ENCODE measurements at regions of chr12 and their contacts with region 1.

Region 1: GRCh38 chr12:116142936-116143898 is 134.3 kb downstream of the MED13L start:
- DNase-seq: no peak
- H3K4me3 ChIP-seq: peak overlapping the region in 1 of 2 experiments; percentile 20; a peak in 1 of 4 replicates
- H3K27ac ChIP-seq: peak overlapping the region; percentile 56 to 95; a peak in 3 of 4 replicates
- H3K4me1 ChIP-seq: peaks cover 26 to 44% of the 10 kb centered on the region in 2 experiments; a peak in 3 of 4 replicates
- H3K27me3 ChIP-seq: no peaks in the 10 kb centered on the region
- CTCF ChIP-seq: no peak
- EP300 ChIP-seq: peak in 1 of 2 experiments; percentile 82; a peak in 1 of 4 replicates
- RAD21 ChIP-seq: no peak

Region 2: GRCh38 chr12:116130431-116130830 is 12.8 kb before region 1 on chr12:
- CTCF ChIA-PET with region 1: interaction called, 19 read pairs
- POLR2A ChIA-PET with region 1: no interaction called
- DNase-seq: peak; percentile 52
- H3K4me3 ChIP-seq: 0 out of 4 replicates have a peak overlapping the region, but pooled peaks of 1 of the 2 experiments have one; percentile 4
- H3K27ac ChIP-seq: peak overlapping the region; percentile 49 to 51; a peak in 3 of 4 replicates
- H3K4me1 ChIP-seq: peaks cover 19 to 74% of the 10 kb centered on the region in 2 experiments
- H3K27me3 ChIP-seq: no peaks in the 10 kb centered on the region
- CTCF ChIP-seq: no peak
- EP300 ChIP-seq: peak; percentile 61 to 73; a peak in 3 of 4 replicates
- RAD21 ChIP-seq: peak; percentile 27; the same call in 1 of the 2 replicates

Region 3: DNA sequence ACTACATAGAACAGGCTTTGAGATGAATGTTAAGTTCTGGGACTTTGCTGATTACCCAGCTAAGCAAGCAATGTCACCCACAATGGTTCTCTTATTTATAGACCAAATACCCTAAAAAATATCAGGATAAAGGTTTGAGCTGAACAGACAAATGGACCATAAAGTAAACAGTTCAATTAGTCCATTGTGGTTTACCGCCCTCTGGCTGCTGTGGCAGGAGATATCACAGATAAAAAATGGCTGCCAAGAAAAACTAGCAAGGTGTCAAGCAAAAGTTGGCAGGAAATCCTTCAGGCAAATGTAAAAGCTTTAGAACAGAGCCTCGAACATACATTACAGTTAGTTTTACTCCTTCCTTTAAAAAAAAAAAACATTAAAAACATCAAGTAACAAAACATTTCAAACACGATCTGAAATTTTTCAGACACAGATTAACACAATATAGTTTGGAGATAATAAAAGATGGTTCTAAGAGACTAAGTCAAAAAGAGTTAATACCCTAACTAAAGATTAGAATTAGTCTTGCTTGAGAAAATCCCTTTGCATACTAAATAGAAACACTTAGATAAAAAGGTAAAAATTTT is 93.0 kb after region 1 on chr12:
- CTCF ChIA-PET with region 1: interaction called, 38 read pairs
- POLR2A ChIA-PET with region 1: no interaction called
- DNase-seq: peak; percentile 48
- H3K4me3 ChIP-seq: no peak overlapping the region
- H3K27ac ChIP-seq: peak overlapping the region; percentile 31; a peak in 2 of 4 replicates
- H3K4me1 ChIP-seq: peaks cover 6 to 22% of the 10 kb centered on the region in 2 experiments; a peak in 3 of 4 replicates
- H3K27me3 ChIP-seq: no peaks in the 10 kb centered on the region
- CTCF ChIP-seq: peak; percentile 72
- EP300 ChIP-seq: 0 out of 4 replicates have a peak, but pooled peaks of 1 of the 2 experiments have one; percentile 14
- RAD21 ChIP-seq: peak; percentile 84

Region 4: GRCh38 chr12:116599285-116600136 is 456.3 kb after region 1 on chr12:
- CTCF ChIA-PET with region 1: interaction called, 15 read pairs
- POLR2A ChIA-PET with region 1: no interaction called
- DNase-seq: peak; percentile 81
- H3K4me3 ChIP-seq: no peak overlapping the region
- H3K27ac ChIP-seq: no peak overlapping the region
- H3K4me1 ChIP-seq: peaks cover 8 to 9% of the 10 kb centered on the region in 2 experiments; a peak in 2 of 4 replicates
- H3K27me3 ChIP-seq: no peaks in the 10 kb centered on the region
- CTCF ChIP-seq: peak; percentile 59
- EP300 ChIP-seq: no peak
- RAD21 ChIP-seq: peak; percentile 62

Measured in SK-N-SH (cell line).